Activated CD4-positive, alpha-beta T cell treated with anti-CD3 and anti-CD28 coated beads, Interleukin-2, amount 10 ng/mL, durations not matched to agents 24 days and 14 days (primary cell): ENCODE measurements at regions of chr1 and their contacts with region 1.

Region 1: DNA sequence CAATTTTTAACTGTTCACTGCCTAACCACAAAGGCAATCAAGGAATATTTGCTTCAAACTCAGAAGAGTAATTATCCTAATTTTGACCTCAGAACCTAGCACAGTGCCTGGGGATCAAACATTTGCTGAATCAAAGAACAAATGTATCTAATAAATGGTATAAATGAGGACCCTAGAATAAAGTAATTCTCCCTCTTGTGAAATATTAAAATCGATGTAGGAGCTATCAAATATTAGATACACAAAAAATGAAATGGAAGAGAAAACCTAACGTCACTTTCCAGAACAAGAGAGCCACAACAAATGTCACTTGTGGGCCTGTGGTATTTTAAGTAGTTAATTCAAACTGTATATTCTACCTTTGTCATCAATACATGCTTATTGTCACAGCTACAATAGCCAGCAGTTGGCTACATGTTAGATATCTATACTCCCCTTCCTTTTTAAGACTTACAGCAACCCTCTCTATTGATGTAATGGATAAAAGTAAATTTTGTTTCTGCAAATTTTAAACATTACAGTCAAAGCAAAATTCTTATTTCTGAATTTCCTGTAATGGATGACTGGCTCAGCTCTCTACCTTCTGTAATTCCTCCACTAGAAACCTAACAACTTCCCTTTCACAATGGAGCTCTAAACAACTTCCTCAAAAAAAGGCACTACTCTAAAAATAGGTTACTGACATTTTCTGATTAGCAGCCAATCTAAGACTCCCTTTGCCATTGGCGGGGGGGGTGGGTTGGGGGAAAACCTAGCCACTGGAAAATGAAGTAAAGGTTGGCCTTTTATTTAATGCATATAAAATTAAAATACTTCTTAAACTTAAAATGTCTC is 37.6 kb downstream of the PUM1 start:
- DNase-seq: no peak
- H3K4me3 Mint-ChIP-seq: peak overlapping the region; percentile 40
- H3K27ac Mint-ChIP-seq: peak overlapping the region; percentile 29
- H3K4me1 Mint-ChIP-seq: peaks cover 40% of the 10 kb centered on the region
- H3K27me3 Mint-ChIP-seq: no peaks in the 10 kb centered on the region

Region 2: DNA sequence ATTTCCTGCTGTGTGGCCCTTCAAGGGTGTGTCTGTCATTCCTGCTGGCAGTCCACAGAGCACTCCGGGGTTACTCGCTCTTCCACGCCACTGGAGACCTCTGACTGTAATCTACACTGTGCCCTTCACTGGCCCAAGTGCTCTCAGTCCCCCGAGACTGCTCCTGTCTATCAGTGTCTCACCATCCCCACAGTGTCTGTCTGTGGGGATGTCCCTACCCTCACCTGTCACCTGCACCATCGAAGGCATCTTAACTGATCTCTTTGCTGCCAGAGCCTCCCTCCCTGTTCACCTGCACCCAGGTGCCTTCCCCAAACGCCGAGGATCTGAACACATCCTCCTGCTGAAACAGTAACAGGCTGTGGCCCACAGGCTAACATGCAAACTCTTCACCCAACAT is 441.2 kb before region 1 on chr1:
- intact Hi-C with region 1: no loop called
- DNase-seq: peak; percentile 39
- H3K4me3 Mint-ChIP-seq: no peak overlapping the region
- H3K27ac Mint-ChIP-seq: no peak overlapping the region
- H3K4me1 Mint-ChIP-seq: no peaks in the 10 kb centered on the region
- H3K27me3 Mint-ChIP-seq: peaks cover 22% of the 10 kb centered on the region

Region 3: DNA sequence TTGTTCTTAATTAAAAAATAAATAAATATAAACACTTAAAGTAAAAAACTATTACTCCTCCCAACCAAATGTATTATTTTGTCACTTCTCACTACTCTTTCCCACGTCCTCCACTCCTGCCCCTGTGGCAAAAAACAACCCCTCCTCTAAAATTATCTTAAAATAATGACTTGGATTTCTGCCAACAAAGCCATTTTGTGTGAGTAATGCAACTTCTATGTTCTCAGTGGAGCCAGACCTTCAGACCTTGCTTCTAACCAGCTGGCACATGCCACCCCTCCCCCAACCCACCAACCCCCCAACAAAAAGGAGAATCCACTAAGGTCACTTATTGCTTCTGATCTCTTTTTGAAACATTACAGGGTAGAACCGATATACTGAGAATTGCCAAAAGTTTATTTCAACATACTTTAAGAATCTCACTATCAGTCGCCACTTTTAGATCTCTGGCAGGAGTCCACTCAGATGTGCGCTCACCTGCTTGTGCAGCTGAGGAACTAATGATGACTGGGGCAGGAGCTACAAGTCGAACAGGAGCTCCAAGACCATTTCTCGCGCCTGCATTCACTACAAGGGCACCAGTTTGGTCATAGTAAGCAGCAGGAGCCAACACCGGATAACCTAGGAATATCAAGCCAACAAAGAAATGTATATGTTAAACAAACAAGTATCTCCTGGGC is 61.1 kb before region 1 on chr1:
- intact Hi-C with region 1: no loop called
- DNase-seq: no peak
- H3K4me3 Mint-ChIP-seq: no peak overlapping the region
- H3K27ac Mint-ChIP-seq: no peak overlapping the region
- H3K4me1 Mint-ChIP-seq: peaks cover 10% of the 10 kb centered on the region
- H3K27me3 Mint-ChIP-seq: no peaks in the 10 kb centered on the region

Region 4: GRCh38 chr1:31010086-31010989 is 17.6 kb before region 1 on chr1:
- intact Hi-C with region 1: loop called (anchors 1 kb)
- DNase-seq: peak; percentile 67
- H3K4me3 Mint-ChIP-seq: no peak overlapping the region
- H3K27ac Mint-ChIP-seq: peak overlapping the region; percentile 81
- H3K4me1 Mint-ChIP-seq: peaks cover 47% of the 10 kb centered on the region
- H3K27me3 Mint-ChIP-seq: no peaks in the 10 kb centered on the region

Region 5: GRCh38 chr1:31072304-31072746 is 44.4 kb after region 1 on chr1:
- intact Hi-C with region 1: no loop called
- DNase-seq: no peak
- H3K4me3 Mint-ChIP-seq: no peak overlapping the region
- H3K27ac Mint-ChIP-seq: no peak overlapping the region
- H3K4me1 Mint-ChIP-seq: no peaks in the 10 kb centered on the region
- H3K27me3 Mint-ChIP-seq: peaks cover 2% of the 10 kb centered on the region

Region 6: DNA sequence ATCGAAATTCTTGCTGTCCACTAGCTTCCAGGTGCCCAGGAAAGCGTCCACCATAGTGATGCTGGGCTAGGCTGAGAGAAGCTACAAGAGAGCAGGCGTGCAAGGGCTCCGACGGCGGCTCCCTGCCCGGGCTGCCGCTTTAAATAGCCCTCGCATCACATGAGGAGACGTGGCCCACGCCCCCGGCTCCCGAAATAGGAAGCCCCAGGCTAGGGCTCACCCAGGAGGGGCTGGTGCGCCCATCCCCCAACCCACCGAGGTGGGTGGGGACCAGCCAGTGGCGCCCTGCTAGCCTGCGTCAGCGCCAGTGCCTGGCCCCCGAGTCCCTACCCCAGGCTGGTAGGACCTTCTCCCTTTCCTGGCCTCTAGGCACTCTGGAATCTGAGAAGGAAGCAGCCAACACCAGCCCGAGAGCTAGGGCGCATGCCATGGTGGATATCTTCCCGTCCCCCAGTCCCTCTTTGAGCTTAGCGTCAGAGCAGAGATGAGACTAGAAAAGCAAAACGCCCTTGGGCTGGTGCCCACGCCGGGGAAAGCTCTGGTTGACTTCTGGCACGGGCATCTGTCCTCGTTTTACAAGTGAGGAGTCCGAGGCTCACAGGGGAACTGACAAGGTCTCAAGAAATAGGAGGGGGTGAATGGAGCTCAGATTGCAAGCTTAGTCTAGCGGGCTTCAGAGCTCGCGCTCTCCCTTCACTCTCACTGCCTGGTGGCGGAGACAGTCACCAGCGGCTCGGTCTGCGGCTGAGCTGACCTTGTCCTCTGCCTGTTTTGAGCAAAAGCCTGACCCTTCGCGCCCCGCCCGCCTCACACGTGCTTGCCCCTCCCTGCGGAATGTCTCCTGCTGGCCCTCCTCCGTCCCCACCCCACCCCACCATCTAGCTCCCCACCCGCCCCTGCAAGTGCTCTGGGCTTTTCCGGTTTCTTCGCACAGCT is 345.3 kb after region 1 on chr1 and contains the start of gene FABP3:
- intact Hi-C with region 1: no loop called
- DNase-seq: peak; percentile 64
- H3K4me3 Mint-ChIP-seq: peak within 1 kb of the TSS; percentile 79
- H3K27ac Mint-ChIP-seq: peak within 1 kb of the TSS; percentile 59
- H3K4me1 Mint-ChIP-seq: peaks cover 11% of the 10 kb centered on the region
- H3K27me3 Mint-ChIP-seq: peaks cover 9% of the 10 kb centered on the region
- total RNA-seq, gene FABP3: not detected in 2 replicates